HEK293 (cell line): ENCODE measurements at regions of chr3 and their contacts with region 1.

Region 1: GRCh38 chr3:52770496-52771333 is at the start of gene NEK4:
- H3K4me3 ChIP-seq: peak within 1 kb of the TSS; percentile 94
- H3K27ac ChIP-seq: peak within 1 kb of the TSS; percentile 72
- H3K4me1 ChIP-seq: peaks cover 3% of the 10 kb centered on the region; the same call in 1 of the 2 replicates
- CTCF ChIP-seq: peak; percentile 39; the same call in 1 of the 2 replicates

Region 2: DNA sequence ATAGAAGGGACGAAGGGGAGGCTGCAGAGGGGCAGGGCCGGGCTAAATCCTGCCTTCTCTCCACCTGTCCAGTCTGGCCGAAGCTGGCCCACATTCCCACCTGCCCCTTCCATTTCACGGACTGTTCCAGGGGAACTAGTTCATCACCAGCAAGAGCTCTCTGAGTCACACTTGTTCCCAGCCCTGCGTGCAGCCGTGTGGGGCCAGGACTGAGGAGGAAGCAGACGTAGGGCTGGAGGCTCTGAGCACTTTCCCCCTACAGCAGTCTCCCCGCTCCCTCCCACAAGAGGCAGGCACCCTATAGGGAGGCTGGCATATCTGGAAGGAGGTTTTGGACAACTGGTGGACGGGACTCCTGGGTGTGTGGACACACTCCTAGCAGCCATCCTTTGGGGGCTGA is 56.7 kb after region 1 on chr3:
- CTCF ChIA-PET with region 1: no interaction called
- POLR2A ChIA-PET with region 1: interaction called, 10 read pairs
- H3K4me3 ChIP-seq: no peak overlapping the region
- H3K27ac ChIP-seq: no peak overlapping the region
- H3K4me1 ChIP-seq: peaks cover 12% of the 10 kb centered on the region; the same call in 1 of the 2 replicates
- CTCF ChIP-seq: no peak

Region 3: DNA sequence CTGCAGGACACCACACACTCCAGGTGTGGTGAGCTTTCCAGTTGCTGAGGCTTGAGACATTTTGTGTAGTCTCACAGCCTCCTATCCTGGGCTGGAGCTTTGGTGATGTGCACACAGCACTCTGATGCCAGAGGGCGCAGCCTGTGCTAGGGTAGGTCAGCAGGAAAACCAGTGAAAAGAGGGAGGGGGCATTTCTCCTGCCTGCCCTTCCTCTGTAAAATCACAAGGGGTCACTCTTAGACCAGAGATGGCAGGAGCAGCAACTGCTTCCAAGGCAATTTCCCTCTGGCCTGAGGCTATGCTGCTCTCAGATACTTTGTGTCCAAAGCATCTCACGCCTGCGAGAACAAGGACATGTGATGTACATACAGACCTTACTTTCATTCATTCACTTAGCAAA is 80.6 kb after region 1 on chr3:
- CTCF ChIA-PET with region 1: no interaction called
- POLR2A ChIA-PET with region 1: no interaction called
- H3K4me3 ChIP-seq: no peak overlapping the region
- H3K27ac ChIP-seq: no peak overlapping the region
- H3K4me1 ChIP-seq: no peaks in the 10 kb centered on the region
- CTCF ChIP-seq: peak; percentile 74